AG04450 (cell line): ENCODE measurements at regions of chr14 and their contacts with region 1.

Region 1: GRCh38 chr14:94485944-94486841 is 10.2 kb upstream of the SERPINA9 start:
- DNase-seq: peak; percentile 18
- H3K4me3 ChIP-seq: peak overlapping the region; percentile 23; the same call in 1 of the 2 replicates
- H3K27ac ChIP-seq: no peak overlapping the region
- H3K27me3 ChIP-seq: peaks cover 13% of the 10 kb centered on the region
- CTCF ChIP-seq: peak; percentile 100

Region 2: DNA sequence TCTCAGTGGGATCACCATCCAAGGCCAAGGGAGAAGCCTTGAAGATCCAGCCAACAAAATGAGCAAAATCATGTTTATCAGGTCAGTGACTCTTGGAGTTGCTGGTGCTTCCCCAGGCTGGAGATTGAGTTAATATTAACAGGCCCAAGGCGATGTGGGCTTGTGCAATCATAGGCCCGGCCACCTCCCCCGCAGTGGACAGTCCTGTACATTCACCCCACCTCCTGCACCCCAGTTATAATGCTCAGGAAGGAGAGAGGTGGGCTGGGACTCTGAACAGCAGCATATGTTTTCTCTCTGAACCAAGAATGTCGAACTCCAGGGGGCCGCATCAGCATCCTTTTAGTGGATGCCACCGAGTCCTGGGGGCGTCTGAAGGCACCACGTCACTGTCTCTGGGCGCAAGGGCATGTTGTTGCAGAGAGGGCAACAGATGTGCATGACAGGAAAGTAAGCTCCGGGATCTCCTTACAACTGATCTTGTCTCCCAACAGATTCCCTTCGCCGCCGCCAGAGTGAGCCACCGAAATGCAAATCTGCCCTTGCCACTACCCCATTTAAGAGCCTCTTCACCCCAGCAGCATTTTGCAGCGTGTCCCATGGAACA is 130.9 kb before region 1 on chr14:
- CTCF ChIA-PET with region 1: interaction called, 21 read pairs
- POLR2A ChIA-PET with region 1: no interaction called
- DNase-seq: peak; percentile 26
- H3K4me3 ChIP-seq: no peak overlapping the region
- H3K27ac ChIP-seq: no peak overlapping the region
- H3K27me3 ChIP-seq: no peaks in the 10 kb centered on the region
- CTCF ChIP-seq: peak; percentile 70

Region 3: GRCh38 chr14:94401083-94401482 is 85.1 kb before region 1 on chr14:
- CTCF ChIA-PET with region 1: no interaction called
- POLR2A ChIA-PET with region 1: no interaction called
- DNase-seq: no peak
- H3K4me3 ChIP-seq: no peak overlapping the region
- H3K27ac ChIP-seq: no peak overlapping the region
- H3K27me3 ChIP-seq: no peaks in the 10 kb centered on the region
- CTCF ChIP-seq: no peak

Region 4: DNA sequence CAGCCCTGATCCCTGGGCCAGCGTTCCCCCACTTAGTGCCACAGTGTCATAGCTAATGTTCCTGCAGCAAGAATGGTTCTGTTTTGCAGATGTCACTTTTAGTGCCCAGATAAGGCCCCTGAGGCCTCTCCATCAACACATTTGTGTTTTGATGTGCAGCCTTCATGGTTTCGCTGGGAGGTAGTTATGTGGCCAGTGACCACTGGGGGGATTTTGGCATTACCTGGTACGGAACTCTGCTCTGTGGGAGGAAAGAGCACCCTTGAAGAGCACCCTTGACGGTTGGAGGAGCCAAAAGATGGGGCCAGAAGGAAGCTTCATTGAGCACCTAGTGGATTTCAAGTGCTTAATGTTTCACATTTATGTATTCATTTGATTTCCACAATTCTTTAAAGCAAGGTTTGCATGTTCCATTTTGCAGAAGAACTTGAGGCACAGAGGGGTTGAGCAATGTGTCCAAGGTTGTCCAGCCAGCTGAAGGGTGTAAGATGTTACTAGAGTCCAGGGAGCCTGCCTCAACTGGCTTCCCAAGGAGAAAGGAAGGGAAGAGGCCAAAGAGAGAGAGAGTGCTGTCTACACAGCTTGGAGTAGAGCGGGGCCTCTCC is 46.6 kb before region 1 on chr14:
- CTCF ChIA-PET with region 1: interaction called, 78 read pairs
- POLR2A ChIA-PET with region 1: no interaction called
- DNase-seq: no peak
- H3K4me3 ChIP-seq: no peak overlapping the region
- H3K27ac ChIP-seq: no peak overlapping the region
- H3K27me3 ChIP-seq: no peaks in the 10 kb centered on the region
- CTCF ChIP-seq: no peak

Region 5: GRCh38 chr14:94505641-94506040 is 19.4 kb after region 1 on chr14:
- CTCF ChIA-PET with region 1: interaction called, 19 read pairs
- POLR2A ChIA-PET with region 1: no interaction called
- DNase-seq: no peak
- H3K4me3 ChIP-seq: no peak overlapping the region
- H3K27ac ChIP-seq: no peak overlapping the region
- H3K27me3 ChIP-seq: peaks cover 3% of the 10 kb centered on the region
- CTCF ChIP-seq: no peak

Region 6: GRCh38 chr14:94540031-94540794 is 54.0 kb after region 1 on chr14:
- CTCF ChIA-PET with region 1: interaction called, 13 read pairs
- POLR2A ChIA-PET with region 1: no interaction called
- DNase-seq: no peak
- H3K4me3 ChIP-seq: no peak overlapping the region
- H3K27ac ChIP-seq: no peak overlapping the region
- H3K27me3 ChIP-seq: peaks cover 2% of the 10 kb centered on the region
- CTCF ChIP-seq: no peak

Region 7: GRCh38 chr14:95011445-95012006 is 525.3 kb after region 1 on chr14:
- CTCF ChIA-PET with region 1: no interaction called
- POLR2A ChIA-PET with region 1: no interaction called
- DNase-seq: no peak
- H3K4me3 ChIP-seq: no peak overlapping the region
- H3K27ac ChIP-seq: no peak overlapping the region
- H3K27me3 ChIP-seq: no peaks in the 10 kb centered on the region
- CTCF ChIP-seq: no peak